Activated naive CD4-positive, alpha-beta T cell treated with anti-CD3 and anti-CD28 coated beads for 36 hours (primary cell): ENCODE measurements at regions of chr13 and their contacts with region 1.

Region 1: GRCh38 chr13:50678464-50679162 is 164.9 kb downstream of the DLEU7 start:
- DNase-seq: no peak
- H3K4me3 Mint-ChIP-seq: no peak overlapping the region
- H3K27ac Mint-ChIP-seq: no peak overlapping the region
- H3K4me1 Mint-ChIP-seq: no peaks in the 10 kb centered on the region
- H3K27me3 Mint-ChIP-seq: peaks cover 3% of the 10 kb centered on the region

Region 2: DNA sequence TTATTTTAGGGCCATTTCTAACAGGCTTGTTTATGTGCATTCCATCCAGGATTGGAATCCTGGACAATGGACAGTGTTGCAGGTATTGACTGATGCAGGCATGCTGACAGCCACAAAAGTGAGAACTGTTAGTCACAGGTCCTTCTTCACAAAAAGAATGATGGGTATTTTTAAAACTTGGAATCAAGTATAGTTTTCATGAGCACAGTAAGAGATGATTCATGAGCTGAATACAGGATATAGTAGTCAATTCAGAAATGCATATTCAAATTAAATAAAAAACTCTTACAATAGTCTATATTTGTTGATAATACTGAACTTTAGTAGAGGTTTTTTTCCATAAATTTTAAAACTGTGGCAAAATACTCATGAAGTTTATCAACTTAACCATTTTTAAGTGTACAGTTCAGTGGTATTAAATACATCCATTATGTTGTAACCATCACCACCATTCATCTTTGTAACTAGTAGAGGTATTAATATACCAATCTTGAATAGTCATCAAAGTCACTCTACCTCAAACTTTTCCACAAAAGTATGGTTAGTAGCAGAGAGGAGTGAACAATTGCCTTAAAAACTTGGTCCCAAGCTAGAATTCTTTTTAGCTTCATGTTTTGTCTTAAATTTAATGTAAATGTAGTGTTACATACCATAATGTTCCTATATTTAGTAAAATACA is 583.9 kb before region 1 on chr13:
- CTCF ChIA-PET with region 1: no interaction called
- intact Hi-C with region 1: no loop called
- DNase-seq: peak; percentile 42
- H3K4me3 Mint-ChIP-seq: no peak overlapping the region
- H3K27ac Mint-ChIP-seq: no peak overlapping the region
- H3K4me1 Mint-ChIP-seq: peaks cover 30% of the 10 kb centered on the region
- H3K27me3 Mint-ChIP-seq: no peaks in the 10 kb centered on the region

Region 3: DNA sequence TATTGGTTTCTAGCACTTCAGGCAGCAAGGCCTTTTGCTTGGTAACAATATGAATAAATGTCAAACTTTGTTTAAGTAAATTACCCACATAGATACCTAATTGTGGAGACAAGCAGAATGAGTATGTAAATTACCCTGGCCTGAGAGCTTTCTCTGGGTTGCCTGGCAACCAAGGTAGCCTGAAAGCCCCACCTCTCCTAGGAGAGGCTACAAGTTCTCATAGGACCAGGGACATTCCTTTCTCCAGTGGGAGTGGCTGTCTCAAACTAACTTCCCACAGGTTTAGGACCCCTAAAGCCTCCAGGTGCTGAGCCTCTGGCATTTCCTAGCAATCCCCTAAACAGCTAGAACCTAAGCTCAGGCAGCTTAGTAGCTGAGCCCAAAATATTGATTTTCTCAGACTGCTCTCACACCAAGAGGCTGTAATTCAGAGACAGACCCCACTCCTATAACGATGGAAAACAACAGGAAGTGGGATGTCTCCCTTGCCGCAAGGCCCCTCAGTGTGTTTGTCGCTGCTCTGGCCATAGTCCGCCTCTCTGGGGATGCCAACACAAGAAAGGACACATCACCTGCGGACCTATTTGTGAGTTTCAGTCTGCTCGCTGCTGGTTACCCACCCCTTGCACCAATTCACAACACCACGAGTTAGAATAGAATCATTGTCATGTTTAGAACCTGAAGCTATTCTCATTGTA is 42.5 kb before region 1 on chr13:
- CTCF ChIA-PET with region 1: no interaction called
- intact Hi-C with region 1: loop called (anchors 1 kb)
- DNase-seq: no peak
- H3K4me3 Mint-ChIP-seq: no peak overlapping the region
- H3K27ac Mint-ChIP-seq: no peak overlapping the region
- H3K4me1 Mint-ChIP-seq: no peaks in the 10 kb centered on the region
- H3K27me3 Mint-ChIP-seq: no peaks in the 10 kb centered on the region